Naive thymus-derived CD4-positive, alpha-beta T cell (primary cell): ENCODE measurements at regions of chr5 and their contacts with region 1.

Region 1: DNA sequence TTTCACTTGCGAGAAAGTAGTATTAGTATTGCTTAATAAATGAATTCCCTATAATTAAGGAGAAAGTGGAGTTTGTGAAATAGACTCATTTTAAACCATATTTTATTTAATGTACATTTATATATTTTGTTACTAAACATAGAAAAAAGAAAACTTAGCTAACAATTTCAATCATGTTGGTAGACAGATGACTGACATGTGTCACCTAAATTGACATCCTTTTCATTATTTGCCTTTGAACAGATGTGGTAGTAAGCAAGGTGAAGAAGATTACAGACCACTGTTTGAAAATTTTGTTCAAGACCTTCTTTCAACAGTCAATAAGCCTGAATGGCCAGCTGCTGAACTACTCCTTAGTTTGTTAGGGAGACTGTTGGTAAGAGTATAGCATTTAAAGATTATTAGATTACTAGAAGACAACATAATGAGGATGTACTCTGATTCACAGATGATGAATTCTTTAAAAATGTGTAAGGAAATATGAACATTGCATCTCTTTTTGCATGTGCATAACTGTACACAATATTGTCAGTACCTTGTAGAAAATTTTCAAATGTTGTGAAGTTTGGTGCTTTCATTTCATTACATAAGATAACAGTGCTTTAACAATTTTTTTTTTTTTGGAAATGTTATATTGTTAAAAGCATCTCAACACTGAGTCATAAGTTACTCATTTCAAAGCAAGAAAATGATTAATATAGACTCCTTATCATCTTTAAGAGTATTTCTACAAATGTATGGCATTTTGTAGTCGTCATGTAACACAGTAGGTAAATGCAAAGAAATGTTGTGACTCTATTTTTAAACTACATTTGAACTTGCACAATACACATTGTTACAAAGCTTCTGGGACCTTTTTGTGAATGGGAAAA is 139.5 kb downstream of the NIPBL start:
- DNase-seq: no peak
- ATAC-seq: no peak
- H3K4me3 ChIP-seq: no peak overlapping the region
- H3K4me3 Mint-ChIP-seq: no peak overlapping the region
- H3K27ac ChIP-seq: no peak overlapping the region
- H3K27ac Mint-ChIP-seq: no peak overlapping the region
- H3K4me1 ChIP-seq: no peaks in the 10 kb centered on the region
- H3K4me1 Mint-ChIP-seq: no peaks in the 10 kb centered on the region
- H3K27me3 ChIP-seq: no peaks in the 10 kb centered on the region
- H3K27me3 Mint-ChIP-seq: no peaks in the 10 kb centered on the region

Region 2: GRCh38 chr5:37034955-37035354 is 18.9 kb after region 1 on chr5:
- CTCF ChIA-PET with region 1: no interaction called
- POLR2A ChIA-PET with region 1: no interaction called
- intact Hi-C with region 1: loop called in 1 of 2 experiments (anchors 2 kb)
- DNase-seq: no peak
- ATAC-seq: no peak
- H3K4me3 ChIP-seq: no peak overlapping the region
- H3K4me3 Mint-ChIP-seq: no peak overlapping the region
- H3K27ac ChIP-seq: no peak overlapping the region
- H3K27ac Mint-ChIP-seq: peak overlapping the region in 2 of 9 donors; percentile 32 to 58
- H3K4me1 ChIP-seq: peaks cover 0 to 3% of the 10 kb centered on the region in 2 donors
- H3K4me1 Mint-ChIP-seq: peaks cover 0 to 3% (median 0%) of the 10 kb centered on the region in 7 donors
- H3K27me3 ChIP-seq: no peaks in the 10 kb centered on the region
- H3K27me3 Mint-ChIP-seq: no peaks in the 10 kb centered on the region